ENCODE measurements at regions of chr19 and their contacts with region 1.

Region 1: DNA sequence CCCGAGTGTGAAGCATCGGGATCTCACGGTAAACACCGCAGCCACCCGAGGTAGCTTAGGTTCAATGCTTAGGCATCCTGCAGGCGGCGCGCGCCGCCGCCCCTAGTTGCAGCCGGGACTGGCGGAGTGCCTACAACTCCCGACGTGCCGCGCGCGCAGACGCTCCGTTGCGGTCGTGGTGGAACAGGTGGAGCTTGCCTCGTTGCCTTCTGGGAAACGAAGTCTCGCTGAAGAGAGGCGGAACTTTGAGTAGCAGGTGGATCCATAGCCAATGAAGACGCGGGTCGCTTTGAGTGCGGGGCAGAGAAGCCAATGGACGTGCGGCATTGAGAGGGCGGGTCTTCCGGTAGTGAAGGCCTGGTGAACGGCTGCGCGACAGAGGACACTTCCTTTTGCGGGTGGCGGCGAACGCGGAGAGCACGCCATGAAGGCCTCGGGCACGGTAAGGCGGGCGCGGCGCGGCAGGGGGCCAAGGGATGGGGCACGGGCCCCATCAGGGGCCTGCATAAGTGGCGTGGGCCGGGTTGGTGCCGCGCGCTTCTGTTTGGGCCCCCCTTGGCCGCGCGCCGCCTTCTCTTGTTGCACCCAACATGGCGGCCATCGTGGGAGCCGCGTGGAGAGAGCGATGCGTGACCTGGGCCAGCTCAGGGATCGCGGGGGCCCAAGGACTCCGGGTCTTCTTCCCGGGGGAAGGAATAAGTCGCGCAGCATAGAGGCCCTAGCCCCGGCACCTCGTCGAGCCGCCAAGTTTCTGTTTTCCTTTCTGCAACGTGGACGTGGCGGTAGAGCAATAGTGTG is at the start of gene RPL18A:
- DNase-seq: peak; percentile 99
- H3K4me3 Mint-ChIP-seq: peak within 1 kb of the TSS; percentile 94
- H3K27ac Mint-ChIP-seq: peak within 1 kb of the TSS; percentile 98
- H3K4me1 Mint-ChIP-seq: peaks cover 29% of the 10 kb centered on the region
- H3K27me3 Mint-ChIP-seq: no peaks in the 10 kb centered on the region
- total RNA-seq, gene RPL18A: 2,698 and 2,718 TPM in 2 replicates

Region 2: DNA sequence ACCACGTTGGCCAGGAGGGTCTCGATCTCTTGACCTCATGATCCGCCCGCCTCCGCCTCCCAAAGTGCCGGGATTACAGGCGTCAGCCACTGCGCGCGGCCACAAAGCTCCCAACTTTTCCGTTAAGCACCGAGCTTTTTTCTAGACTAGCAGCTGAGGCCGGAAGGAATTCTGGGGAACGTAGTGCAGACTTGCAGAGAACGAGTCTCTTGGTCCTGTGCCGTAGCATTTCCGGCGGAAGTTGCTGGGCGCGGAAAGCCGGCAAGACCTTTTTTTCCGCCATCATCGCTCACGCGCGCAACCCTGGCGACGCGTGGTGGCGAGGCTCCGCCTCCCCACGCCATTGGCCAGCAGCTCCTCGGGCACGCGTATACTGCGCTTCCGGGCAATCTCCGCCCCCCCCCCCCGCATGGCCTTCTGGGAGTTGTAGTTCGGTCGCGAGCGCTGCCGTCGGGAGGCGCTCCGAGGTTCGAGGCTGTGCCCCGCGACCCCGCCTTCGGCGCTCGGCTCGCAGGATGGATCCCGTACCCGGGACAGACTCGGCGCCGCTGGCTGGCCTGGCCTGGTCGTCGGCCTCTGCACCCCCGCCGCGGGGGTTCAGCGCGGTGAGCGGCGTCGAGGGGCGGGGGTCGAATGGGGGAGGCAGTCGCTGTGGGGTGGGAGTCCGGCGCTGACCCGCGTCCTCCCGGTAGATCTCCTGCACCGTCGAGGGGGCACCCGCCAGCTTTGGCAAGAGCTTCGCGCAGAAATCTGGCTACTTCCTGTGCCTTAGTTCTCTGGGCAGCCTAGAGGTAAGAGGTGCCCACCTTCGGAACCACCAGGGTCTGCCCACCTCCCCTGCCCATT is 439.9 kb before region 1 on chr19 and contains the start of gene MVB12A:
- intact Hi-C with region 1: loop called (anchors 10 kb)
- DNase-seq: peak; percentile 98
- H3K4me3 Mint-ChIP-seq: peak within 1 kb of the TSS; percentile 92
- H3K27ac Mint-ChIP-seq: peak within 1 kb of the TSS; percentile 91
- H3K4me1 Mint-ChIP-seq: peaks cover 23% of the 10 kb centered on the region
- H3K27me3 Mint-ChIP-seq: no peaks in the 10 kb centered on the region
- total RNA-seq, gene MVB12A: 40.3 and 45.8 TPM in 2 replicates

Region 3: DNA sequence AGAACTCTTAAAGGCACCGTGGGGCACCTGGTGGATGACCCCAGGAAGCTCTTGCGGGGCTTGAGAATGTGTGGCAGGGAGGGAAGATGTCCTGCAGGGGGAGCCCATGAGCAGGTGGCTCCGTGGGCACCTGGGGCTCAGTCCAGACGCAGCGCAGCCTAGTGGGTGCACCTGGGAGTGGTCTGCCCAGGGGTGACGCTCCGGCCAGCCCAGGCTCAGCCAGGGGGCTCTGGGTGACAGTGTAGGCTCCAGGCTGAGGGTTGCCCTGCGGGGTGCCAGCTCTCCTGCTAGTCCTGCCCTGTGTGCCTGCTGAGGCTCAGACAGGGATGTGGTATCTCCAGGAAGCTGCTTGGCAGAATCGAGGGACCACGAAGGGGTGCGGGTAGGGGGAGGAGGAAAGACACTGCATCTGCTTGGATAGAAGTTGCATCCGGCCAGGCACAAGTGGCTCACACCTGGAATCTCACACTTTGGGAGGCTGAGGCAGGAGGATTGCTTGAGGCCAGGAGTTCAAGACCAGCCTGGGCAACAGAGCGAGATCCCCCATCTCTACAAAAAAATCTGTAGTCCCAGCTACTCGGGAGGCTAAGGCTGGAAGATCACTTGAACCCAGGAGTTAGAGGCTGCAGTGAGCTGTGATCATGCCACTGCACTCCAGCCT is 363.3 kb before region 1 on chr19:
- intact Hi-C with region 1: loop called (anchors 5 kb)
- DNase-seq: peak; percentile 94
- H3K4me3 Mint-ChIP-seq: peak overlapping the region; percentile 35
- H3K27ac Mint-ChIP-seq: no peak overlapping the region
- H3K4me1 Mint-ChIP-seq: peaks cover 14% of the 10 kb centered on the region
- H3K27me3 Mint-ChIP-seq: no peaks in the 10 kb centered on the region

Region 4: GRCh38 chr19:17784201-17785008 is 75.3 kb before region 1 on chr19:
- intact Hi-C with region 1: loop called (anchors 5 kb)
- DNase-seq: peak; percentile 91
- H3K4me3 Mint-ChIP-seq: no peak overlapping the region
- H3K27ac Mint-ChIP-seq: peak overlapping the region; percentile 45
- H3K4me1 Mint-ChIP-seq: peaks cover 9% of the 10 kb centered on the region
- H3K27me3 Mint-ChIP-seq: no peaks in the 10 kb centered on the region

Region 5: DNA sequence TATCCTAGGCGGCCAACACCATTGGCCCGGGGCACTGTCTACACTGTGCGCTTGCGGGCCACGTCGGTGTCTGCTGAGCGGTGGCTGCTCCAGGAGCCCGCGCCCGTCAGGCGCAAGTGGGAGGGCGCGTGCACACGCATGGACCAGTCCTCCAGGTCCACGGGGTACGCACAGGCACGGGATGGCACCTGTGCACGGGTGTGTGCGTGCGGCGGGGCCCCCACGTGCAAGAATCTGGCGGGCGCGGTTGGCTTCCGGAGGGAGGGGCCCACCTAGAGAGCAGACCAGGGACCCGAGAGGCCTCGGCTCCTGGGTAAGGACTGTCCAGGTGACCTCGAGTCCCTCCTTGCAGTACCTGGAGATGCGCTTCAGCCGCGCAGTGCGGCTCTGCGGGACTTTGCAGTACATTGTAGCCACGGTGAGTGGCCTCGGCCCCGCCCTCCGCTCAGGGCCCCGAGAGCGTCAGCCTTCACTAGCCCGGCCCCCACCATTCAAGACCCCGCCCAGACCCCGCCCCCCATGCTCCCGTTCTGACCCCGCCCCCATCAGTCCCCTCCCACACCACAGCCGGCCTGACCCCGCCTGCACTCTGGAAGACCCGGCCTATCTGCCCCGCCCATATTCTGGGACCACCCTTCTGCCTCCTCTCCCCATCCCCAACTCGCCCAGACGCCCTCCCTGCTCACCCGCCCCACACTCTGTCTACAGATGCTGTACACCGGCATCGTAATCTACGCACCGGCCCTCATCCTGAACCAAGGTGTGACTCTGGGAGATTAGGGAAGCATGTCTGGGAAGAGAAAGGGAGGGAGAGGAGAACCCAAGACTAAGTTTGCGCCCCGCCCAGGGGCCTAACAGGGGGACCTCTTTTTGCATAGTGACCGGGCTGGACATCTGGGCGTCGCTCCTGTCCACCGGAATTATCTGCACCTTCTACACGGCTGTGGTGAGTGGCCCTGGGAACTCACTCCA is 14.3 kb after region 1 on chr19:
- intact Hi-C with region 1: loop called (anchors 1 kb)
- DNase-seq: peak; percentile 88
- H3K4me3 Mint-ChIP-seq: peak overlapping the region; percentile 90
- H3K27ac Mint-ChIP-seq: peak overlapping the region; percentile 53
- H3K4me1 Mint-ChIP-seq: peaks cover 4% of the 10 kb centered on the region
- H3K27me3 Mint-ChIP-seq: peaks cover 1% of the 10 kb centered on the region

Region 6: DNA sequence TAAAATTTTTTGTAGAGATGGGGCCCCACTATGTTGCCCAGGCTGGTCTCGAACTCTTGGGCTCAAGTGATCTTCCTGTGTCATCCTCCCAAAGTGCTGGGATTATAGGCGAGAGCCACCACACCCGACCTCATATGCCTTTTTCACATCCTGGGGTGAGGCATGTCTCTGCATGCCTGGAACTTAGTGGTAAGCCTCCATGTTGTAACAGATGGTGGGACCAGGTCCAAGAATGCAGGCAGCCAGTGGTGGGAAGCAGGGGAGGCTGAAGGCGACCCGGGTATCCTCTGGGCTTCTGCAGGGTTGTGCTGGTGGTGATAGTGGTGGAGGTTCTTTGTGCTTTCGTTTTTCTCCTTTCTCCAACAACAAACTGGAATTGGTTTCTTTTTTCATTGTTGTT is 43.0 kb after region 1 on chr19:
- intact Hi-C with region 1: no loop called
- DNase-seq: no peak
- H3K4me3 Mint-ChIP-seq: no peak overlapping the region
- H3K27ac Mint-ChIP-seq: no peak overlapping the region
- H3K4me1 Mint-ChIP-seq: no peaks in the 10 kb centered on the region
- H3K27me3 Mint-ChIP-seq: peaks cover 13% of the 10 kb centered on the region

Region 7: GRCh38 chr19:17947815-17948513 is 88.2 kb after region 1 on chr19:
- intact Hi-C with region 1: loop called (anchors 1 kb)
- DNase-seq: peak; percentile 99
- H3K4me3 Mint-ChIP-seq: peak overlapping the region; percentile 87
- H3K27ac Mint-ChIP-seq: peak overlapping the region; percentile 70
- H3K4me1 Mint-ChIP-seq: peaks cover 37% of the 10 kb centered on the region
- H3K27me3 Mint-ChIP-seq: peaks cover 32% of the 10 kb centered on the region

Region 8: GRCh38 chr19:18419195-18419698 is 559.5 kb after region 1 on chr19 and contains the start of gene SSBP4:
- intact Hi-C with region 1: no loop called
- DNase-seq: peak; percentile 94
- H3K4me3 Mint-ChIP-seq: peak within 1 kb of the TSS; percentile 99
- H3K27ac Mint-ChIP-seq: peak within 1 kb of the TSS; percentile 89
- H3K4me1 Mint-ChIP-seq: peaks cover 72% of the 10 kb centered on the region
- H3K27me3 Mint-ChIP-seq: no peaks in the 10 kb centered on the region
- total RNA-seq, gene SSBP4: 154 TPM in 2 replicates